ENCODE measurements at regions of chr16 and their contacts with region 1.

Region 1: GRCh38 chr16:72093448-72094265 is at the starts of genes DHX38 and TXNL4B:
- DNase-seq: peak; percentile 96
- H3K4me3 Mint-ChIP-seq: peak within 1 kb of the TSS; percentile 96
- H3K27ac Mint-ChIP-seq: peak within 1 kb of the TSS; percentile 94
- H3K4me1 Mint-ChIP-seq: peaks cover 33% of the 10 kb centered on the region
- H3K27me3 Mint-ChIP-seq: no peaks in the 10 kb centered on the region
- total RNA-seq, gene DHX38: 72.2 to 77.7 TPM
- total RNA-seq, gene TXNL4B: 18.3 to 20.1 TPM

Region 2: DNA sequence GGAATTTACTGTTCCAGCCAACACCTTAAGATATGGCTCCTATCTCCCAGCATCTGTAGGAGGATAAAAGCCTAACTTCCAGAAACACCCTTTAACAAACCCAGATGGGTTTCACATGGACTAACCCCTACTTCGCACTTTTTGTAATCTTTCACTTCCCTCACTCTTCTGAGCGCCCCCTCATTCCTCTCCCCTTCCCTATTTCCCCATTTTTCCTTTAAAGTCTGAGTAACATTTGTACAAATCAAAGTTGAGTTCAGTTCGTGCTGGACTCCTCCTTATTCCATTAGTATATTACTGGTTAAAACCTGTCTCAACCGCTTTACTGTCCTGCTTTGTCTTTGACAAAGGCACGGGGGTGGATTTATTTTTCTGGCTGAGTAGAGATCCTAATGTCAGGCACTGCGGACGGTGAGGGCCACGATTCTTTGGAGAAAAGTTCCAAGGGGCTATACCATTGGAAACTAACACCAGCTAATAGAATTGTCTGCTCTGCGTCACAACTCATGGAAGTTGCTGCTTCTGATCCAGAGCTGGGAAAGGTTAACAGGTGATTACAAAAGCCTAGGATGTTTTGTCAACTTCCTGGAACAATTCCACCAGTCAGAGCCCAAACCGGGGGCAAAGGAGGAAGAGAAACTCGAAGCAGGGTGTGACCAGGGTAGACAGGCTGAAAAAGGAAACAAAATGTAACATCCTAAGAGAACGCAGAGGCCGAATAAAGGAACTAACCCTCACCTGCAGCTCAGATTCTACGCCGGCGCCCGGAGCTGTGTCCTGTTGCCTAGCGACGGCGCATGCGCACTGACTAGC is 529.3 kb before region 1 on chr16:
- CTCF ChIA-PET with region 1: interaction called, 4 read pairs
- POLR2A ChIA-PET with region 1: no interaction called
- intact Hi-C with region 1: loop called (anchors 1 kb)
- DNase-seq: no peak
- H3K4me3 Mint-ChIP-seq: peak overlapping the region; percentile 79
- H3K27ac Mint-ChIP-seq: peak overlapping the region; percentile 92
- H3K4me1 Mint-ChIP-seq: peaks cover 14% of the 10 kb centered on the region
- H3K27me3 Mint-ChIP-seq: no peaks in the 10 kb centered on the region

Region 3: DNA sequence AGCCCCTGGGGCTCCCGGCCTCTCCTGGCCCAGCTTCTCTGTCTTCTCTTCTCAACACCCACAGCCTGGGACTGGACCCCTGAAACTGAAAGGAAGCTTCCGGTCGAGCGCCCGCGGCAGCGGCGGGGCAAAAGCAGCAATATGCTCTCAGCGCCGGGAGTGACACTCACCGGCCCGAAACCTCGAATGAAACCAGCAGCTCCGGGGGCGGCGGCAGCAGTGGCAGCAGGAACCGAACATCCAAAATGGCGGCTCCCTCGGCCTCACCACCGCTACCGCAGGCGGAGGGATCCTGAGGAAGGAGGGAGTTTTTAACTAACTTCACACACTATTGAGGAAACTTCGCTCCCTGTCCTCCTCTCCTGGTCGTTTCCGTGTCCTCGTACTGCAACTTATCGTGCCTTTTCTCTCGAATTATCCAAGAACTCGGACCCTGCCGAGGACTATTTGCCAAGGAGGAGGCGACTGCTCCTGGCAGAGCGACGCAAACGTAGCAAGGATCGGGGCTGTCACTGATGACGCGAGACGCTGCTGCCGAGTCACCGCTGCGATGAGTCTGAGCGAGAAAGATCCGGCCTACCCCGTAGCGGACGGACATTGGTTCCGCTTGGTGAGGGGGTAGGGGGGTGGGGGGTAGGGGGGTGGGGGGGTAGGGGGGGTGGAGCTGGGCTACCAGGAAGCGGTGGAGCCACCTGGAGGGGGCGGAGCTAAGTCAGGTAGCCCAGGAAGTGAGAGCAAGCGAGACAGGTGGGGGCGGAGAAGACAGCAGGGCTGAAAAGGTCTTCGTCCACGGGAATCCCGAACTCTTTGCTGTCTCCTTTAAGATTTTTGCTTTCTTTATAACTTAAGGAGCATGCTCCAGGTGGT is 284.8 kb before region 1 on chr16 and contains the start of gene AP1G1:
- CTCF ChIA-PET with region 1: no interaction called
- POLR2A ChIA-PET with region 1: no interaction called
- intact Hi-C with region 1: loop called (anchors 1 kb)
- DNase-seq: peak; percentile 96
- H3K4me3 Mint-ChIP-seq: peak within 1 kb of the TSS; percentile 90
- H3K27ac Mint-ChIP-seq: peak within 1 kb of the TSS; percentile 99
- H3K4me1 Mint-ChIP-seq: peaks cover 38% of the 10 kb centered on the region
- H3K27me3 Mint-ChIP-seq: no peaks in the 10 kb centered on the region
- total RNA-seq, gene AP1G1: 65.9 to 66.9 TPM

Region 4: GRCh38 chr16:72008424-72009216 is 85.0 kb before region 1 on chr16 and contains the start of gene DHODH:
- CTCF ChIA-PET with region 1: no interaction called
- POLR2A ChIA-PET with region 1: no interaction called
- intact Hi-C with region 1: loop called (anchors 1 kb)
- DNase-seq: peak; percentile 99
- H3K4me3 Mint-ChIP-seq: peak within 1 kb of the TSS; percentile 91
- H3K27ac Mint-ChIP-seq: peak within 1 kb of the TSS; percentile 76
- H3K4me1 Mint-ChIP-seq: peaks cover 21% of the 10 kb centered on the region
- H3K27me3 Mint-ChIP-seq: no peaks in the 10 kb centered on the region
- total RNA-seq, gene DHODH: 16.9 to 18.6 TPM

Region 5: DNA sequence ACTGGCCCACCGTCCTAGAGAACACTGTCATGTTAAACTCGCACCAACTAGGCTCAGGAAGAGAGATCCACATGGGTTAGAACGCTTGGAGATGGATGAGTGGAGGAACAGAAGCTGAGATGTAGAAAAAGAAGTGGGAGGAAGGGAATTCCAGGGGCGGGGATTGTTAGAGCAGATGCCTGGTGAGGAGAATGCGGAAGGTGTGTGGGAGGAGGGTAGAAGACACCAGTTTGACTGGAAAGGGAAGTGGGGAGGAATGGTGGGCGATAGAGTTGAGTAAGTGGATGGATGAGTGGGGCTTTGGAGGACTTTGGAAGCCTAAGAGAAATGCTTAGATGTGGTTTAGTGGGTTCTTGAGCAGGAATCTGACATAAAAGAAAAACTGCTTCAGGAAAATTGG is 37.4 kb after region 1 on chr16:
- CTCF ChIA-PET with region 1: no interaction called
- POLR2A ChIA-PET with region 1: no interaction called
- intact Hi-C with region 1: no loop called
- DNase-seq: no peak
- H3K4me3 Mint-ChIP-seq: no peak overlapping the region
- H3K27ac Mint-ChIP-seq: no peak overlapping the region
- H3K4me1 Mint-ChIP-seq: no peaks in the 10 kb centered on the region
- H3K27me3 Mint-ChIP-seq: no peaks in the 10 kb centered on the region

Region 6: GRCh38 chr16:72664509-72665225 is 571.0 kb after region 1 on chr16:
- CTCF ChIA-PET with region 1: no interaction called
- POLR2A ChIA-PET with region 1: no interaction called
- intact Hi-C with region 1: loop called (anchors 1 kb)
- DNase-seq: peak; percentile 97
- H3K4me3 Mint-ChIP-seq: peak overlapping the region; percentile 99
- H3K27ac Mint-ChIP-seq: peak overlapping the region; percentile 88
- H3K4me1 Mint-ChIP-seq: peaks cover 9% of the 10 kb centered on the region
- H3K27me3 Mint-ChIP-seq: peaks cover 2% of the 10 kb centered on the region